Left colon (tissue), 2 donors: ENCODE measurements at regions of chr6 and their contacts with region 1.

Region 1: DNA sequence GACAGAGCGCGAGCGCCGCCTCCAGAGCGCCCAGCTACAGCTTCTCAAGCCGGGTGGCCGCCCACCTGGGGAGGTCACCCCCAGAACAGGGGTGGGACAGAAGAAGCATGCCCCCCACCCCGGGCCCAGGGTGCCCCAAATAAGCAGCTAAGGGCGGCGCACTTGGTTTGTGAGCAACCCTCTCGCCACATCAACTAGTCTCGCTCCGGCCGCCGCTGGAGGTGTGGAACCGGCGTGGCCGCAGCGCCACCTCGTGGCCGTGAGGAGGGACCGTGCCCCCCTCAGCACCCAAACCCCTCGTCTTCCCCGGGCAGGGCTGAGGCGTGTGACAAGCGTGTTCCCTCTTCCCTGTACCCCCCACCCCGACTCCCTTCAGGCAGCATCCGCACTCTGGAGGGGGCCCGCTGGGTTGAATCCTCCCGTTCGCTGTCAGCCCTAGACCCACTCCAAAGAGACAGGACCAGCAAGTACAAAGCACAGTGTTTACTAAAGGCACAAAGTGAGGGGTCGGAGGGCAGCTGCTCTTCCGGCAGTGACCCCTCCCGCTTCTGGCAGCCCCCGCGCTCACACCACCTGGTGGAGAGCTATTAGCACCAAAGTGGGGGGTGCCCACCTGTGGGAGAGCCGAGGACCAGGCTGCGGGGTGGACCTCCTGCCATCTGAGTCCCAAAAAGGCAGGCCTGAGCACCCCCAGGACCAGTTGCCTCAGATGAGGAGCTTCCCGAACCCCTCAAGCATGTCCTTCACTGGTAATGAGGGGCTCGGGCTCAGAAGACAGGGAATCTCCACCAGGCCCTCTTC is 45.4 kb downstream of the MDFI start:
- DNase-seq: peak; percentile 64 to 87
- ATAC-seq: peak; percentile 69

Region 2: GRCh38 chr6:41367700-41368099 is 316.0 kb before region 1 on chr6:
- intact Hi-C with region 1: loop called (anchors 5 to 10 kb)
- DNase-seq: peak in 1 of 2 donors; percentile 56
- ATAC-seq: peak; percentile 76

Region 3: GRCh38 chr6:41602864-41603608 is 80.7 kb before region 1 on chr6:
- intact Hi-C with region 1: loop called in 1 of 2 experiments (anchors 2 kb)
- DNase-seq: peak; percentile 79 to 82
- ATAC-seq: peak; percentile 78